ENCODE measurements at regions of chr11 and their contacts with region 1.

Region 1: DNA sequence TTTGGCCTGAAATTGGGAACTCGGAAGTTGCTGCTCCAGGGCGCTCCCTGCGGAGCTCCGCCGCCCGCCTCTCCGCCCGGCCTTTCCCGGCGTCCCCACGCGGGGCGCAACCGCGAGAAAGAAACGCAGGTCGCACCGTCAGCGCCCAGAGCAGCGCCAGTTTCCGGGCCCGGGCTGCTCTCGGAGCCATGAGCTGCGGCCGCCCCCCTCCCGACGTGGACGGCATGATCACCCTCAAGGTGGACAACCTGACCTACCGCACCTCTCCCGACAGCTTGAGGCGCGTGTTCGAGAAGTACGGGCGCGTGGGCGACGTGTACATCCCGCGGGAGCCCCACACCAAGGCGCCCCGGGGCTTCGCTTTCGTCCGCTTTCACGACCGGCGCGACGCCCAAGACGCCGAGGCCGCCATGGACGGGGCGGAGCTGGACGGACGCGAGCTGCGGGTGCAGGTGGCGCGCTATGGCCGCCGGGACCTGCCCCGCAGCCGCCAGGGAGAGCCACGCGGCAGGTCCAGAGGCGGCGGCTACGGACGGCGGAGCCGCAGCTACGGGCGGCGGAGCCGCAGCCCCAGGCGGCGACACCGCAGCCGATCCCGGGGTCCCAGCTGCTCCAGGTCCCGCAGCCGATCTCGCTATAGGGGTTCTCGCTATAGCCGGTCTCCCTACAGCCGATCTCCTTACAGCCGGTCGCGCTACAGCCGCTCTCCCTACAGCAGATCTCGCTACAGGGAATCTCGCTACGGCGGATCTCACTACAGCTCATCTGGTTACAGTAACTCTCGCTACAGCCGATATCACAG is 521 bp downstream of the SRSF8 start:
- DNase-seq: peak; percentile 87
- ATAC-seq: peak; percentile 68
- H3K4me3 Mint-ChIP-seq: peak overlapping the region; percentile 97
- H3K27ac Mint-ChIP-seq: peak overlapping the region; percentile 92
- H3K4me1 Mint-ChIP-seq: peaks cover 25% of the 10 kb centered on the region
- H3K27me3 Mint-ChIP-seq: peaks cover 2% of the 10 kb centered on the region

Region 2: DNA sequence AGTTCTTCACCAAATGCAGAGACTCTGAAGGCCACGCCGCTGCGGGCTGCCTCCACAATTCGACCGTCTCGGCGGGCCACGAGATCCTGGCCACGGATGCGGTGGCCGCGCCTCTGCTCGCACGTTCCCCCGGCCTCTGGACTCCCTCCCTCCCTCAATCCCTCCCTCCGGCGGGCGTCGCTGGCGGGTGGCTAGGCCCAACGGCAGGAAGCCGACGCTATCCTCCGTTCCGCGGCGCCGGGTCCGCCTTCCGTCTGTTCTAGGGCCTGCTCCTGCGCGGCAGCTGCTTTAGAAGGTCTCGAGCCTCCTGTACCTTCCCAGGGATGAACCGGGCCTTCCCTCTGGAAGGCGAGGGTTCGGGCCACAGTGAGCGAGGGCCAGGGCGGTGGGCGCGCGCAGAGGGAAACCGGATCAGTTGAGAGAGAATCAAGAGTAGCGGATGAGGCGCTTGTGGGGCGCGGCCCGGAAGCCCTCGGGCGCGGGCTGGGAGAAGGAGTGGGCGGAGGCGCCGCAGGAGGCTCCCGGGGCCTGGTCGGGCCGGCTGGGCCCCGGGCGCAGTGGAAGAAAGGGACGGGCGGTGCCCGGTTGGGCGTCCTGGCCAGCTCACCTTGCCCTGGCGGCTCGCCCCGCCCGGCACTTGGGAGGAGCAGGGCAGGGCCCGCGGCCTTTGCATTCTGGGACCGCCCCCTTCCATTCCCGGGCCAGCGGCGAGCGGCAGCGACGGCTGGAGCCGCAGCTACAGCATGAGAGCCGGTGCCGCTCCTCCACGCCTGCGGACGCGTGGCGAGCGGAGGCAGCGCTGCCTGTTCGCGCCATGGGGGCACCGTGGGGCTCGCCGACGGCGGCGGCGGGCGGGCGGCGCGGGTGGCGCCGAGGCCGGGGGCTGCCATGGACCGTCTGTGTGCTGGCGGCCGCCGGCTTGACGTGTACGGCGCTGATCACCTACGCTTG is 523.3 kb before region 1 on chr11 and contains the start of gene FUT4:
- CTCF ChIA-PET with region 1: no interaction called
- POLR2A ChIA-PET with region 1: no interaction called
- intact Hi-C with region 1: loop called in 1 of 2 experiments (anchors 1 kb)
- DNase-seq: peak; percentile 87
- ATAC-seq: peak; percentile 83
- H3K4me3 Mint-ChIP-seq: peak within 1 kb of the TSS; percentile 92
- H3K27ac Mint-ChIP-seq: peak within 1 kb of the TSS; percentile 99
- H3K4me1 Mint-ChIP-seq: peaks cover 39% of the 10 kb centered on the region
- H3K27me3 Mint-ChIP-seq: no peaks in the 10 kb centered on the region
- total RNA-seq, gene FUT4: 4.4 to 4.9 TPM

Region 3: GRCh38 chr11:94973099-94973968 is 93.9 kb before region 1 on chr11 and contains the starts of genes CWC15 and KDM4D:
- CTCF ChIA-PET with region 1: interaction called, 9 read pairs
- POLR2A ChIA-PET with region 1: interaction called, 8 read pairs
- intact Hi-C with region 1: loop called (anchors 1 kb)
- DNase-seq: peak; percentile 97
- ATAC-seq: peak; percentile 99
- H3K4me3 Mint-ChIP-seq: peak within 1 kb of the TSS; percentile 84
- H3K27ac Mint-ChIP-seq: peak within 1 kb of the TSS; percentile 94
- H3K4me1 Mint-ChIP-seq: peaks cover 27% of the 10 kb centered on the region
- H3K27me3 Mint-ChIP-seq: no peaks in the 10 kb centered on the region
- total RNA-seq, gene CWC15: 74.7 to 85.0 TPM
- total RNA-seq, gene KDM4D: 1.5 to 1.8 TPM

Region 4: DNA sequence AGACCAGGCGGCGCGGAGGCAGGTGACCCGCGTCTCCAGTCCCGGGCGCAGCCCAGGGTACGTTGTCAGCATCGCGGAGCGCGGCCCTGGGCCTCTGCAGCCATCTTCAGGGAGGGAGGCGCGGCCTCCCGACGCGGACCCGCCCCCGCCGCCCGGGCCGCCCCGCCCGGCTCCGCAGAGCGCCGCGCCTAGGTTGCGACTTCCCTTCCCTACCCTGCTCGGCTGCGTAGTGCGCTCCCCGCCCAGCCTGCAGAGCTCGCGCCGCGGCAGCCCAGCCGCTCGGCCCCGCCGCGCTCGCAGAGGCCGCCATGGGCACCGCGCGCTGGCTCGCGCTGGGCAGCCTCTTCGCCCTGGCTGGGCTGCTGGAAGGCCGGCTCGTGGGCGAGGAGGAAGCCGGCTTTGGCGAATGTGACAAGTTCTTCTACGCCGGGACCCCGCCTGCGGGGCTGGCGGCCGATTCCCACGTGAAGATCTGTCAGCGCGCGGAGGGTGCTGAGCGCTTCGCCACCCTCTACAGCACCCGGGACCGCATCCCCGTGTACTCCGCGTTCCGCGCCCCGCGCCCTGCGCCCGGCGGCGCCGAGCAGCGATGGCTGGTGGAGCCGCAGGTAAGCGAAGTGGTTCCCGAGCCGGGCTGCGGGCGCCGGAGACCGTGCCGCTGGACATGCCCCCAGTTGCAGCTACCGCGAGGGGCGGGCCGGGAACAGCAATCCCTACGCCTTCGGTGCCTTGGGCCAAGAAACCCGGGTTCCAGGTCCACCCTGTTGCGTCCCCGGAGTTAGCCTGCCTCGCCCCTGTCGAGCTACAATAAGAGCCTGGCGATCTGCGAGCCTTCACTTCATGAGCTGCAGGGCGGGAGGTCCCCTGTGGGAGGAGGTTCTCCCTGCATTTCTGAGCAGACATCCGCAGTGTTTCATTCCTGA is 22.6 kb after region 1 on chr11 and contains the start of gene ENDOD1:
- CTCF ChIA-PET with region 1: interaction called, 125 read pairs
- POLR2A ChIA-PET with region 1: interaction called, 9 read pairs
- intact Hi-C with region 1: loop called (anchors 1 kb)
- DNase-seq: peak; percentile 91
- ATAC-seq: peak; percentile 91
- H3K4me3 Mint-ChIP-seq: peak within 1 kb of the TSS; percentile 84
- H3K27ac Mint-ChIP-seq: peak within 1 kb of the TSS; percentile 96
- H3K4me1 Mint-ChIP-seq: peaks cover 61% of the 10 kb centered on the region
- H3K27me3 Mint-ChIP-seq: no peaks in the 10 kb centered on the region
- total RNA-seq, gene ENDOD1: 11.1 to 13.1 TPM

Region 5: DNA sequence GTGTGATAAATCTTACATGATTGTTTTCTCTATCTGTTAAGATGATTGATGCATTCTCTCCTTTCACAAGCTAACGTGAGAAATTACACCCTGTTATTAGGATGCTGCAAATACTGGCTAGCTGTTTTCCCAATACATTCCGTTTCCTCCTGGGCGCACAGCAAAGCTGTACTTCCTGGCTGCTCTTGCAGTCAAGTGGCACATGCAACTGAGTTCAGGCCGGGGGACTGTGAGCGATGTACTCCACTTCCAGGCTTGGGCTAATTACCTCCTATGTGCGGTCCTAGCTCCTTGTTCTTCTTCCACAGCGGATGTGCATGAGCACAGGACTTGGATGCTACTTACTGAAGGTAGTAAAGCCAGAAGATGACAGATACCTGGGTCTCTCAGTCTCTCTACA is 398.6 kb after region 1 on chr11:
- CTCF ChIA-PET with region 1: no interaction called
- POLR2A ChIA-PET with region 1: no interaction called
- intact Hi-C with region 1: no loop called
- DNase-seq: no peak
- ATAC-seq: no peak
- H3K4me3 Mint-ChIP-seq: no peak overlapping the region
- H3K27ac Mint-ChIP-seq: no peak overlapping the region
- H3K4me1 Mint-ChIP-seq: no peaks in the 10 kb centered on the region
- H3K27me3 Mint-ChIP-seq: no peaks in the 10 kb centered on the region

Region 6: DNA sequence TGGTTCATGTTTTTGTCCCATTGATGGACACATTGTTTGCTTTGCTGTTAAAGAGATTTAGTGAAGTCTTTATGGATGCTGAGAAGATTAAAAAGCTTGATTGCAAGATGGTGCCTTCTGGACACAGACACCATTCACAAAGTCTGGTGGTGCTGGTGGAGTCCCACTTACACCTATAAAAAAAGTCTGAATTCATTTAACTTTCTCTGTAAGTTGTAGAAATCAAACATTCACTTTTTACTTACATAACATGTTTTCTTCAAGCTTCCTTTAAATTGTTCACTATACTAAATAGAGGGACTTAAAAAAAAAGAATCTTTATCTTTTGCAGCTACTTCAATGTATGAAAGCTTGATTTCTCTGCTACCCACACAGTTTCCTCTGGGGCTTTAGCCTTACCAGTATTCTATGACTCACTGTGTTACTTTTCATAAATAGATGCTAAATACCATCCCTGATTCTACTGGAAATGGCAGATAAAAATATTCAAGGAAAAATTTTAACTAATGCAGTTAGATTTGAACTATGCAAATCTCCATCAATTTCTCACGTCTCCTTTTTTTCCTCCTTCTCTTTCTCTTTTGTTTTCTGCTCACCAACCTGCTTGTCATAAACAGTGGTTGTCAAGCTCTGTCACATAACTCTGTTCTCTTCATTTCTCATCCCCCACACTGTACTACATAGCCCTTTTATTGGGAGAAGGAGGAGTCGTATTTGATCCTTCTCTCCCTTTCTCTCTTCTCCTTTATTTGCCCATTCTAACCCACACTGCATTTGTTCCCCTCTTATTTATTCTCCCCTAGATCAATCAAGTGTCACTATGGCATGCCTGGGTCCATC is 632.6 kb after region 1 on chr11:
- CTCF ChIA-PET with region 1: interaction called, 8 read pairs
- POLR2A ChIA-PET with region 1: no interaction called
- intact Hi-C with region 1: loop called (anchors 1 to 5 kb)
- DNase-seq: peak; percentile 25
- ATAC-seq: peak; percentile 54
- H3K4me3 Mint-ChIP-seq: peak overlapping the region; percentile 55
- H3K27ac Mint-ChIP-seq: peak overlapping the region; percentile 95
- H3K4me1 Mint-ChIP-seq: peaks cover 58% of the 10 kb centered on the region
- H3K27me3 Mint-ChIP-seq: no peaks in the 10 kb centered on the region

Region 7: DNA sequence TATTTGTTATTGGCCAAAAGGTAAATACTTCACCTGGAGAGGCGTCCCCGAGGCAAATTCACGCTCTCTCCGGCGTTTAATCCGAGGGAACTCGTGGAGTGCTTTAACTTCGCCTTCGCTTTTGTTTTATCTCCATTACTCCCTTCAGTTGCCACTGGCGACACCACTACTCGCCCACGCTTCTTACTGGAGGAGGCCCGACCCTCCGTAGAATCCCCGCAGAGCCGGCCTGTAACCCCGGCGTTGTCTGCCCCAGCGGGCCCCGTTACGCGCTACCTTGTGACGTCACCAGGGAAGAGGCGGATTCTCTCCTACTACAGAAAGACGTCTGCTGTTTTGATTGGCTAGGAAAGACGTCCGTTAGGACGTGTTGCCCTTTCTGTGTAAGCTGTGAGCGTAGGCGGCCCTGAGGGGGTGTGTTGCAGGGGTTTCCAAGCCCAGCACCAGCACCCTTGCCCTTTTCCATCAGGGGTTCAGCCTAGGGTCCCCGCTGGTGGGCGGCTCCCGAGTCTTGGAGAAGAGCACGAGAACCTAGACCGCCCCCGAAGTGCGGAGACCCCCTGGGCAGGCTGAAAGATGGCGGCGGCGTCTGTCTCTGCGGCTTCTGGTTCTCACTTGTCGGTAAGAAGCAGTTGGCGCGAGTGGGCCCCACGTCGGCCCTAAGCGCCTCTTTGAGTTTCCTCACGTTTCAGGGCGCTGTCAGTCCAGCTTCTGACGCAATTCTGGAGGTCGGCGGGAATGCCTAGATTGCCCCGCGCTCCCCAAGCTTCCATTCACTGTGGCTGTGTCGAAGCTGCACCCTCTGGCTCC is 723.1 kb after region 1 on chr11 and contains the start of gene CEP57:
- CTCF ChIA-PET with region 1: interaction called, 8 read pairs
- POLR2A ChIA-PET with region 1: interaction called, 4 read pairs
- intact Hi-C with region 1: loop called (anchors 1 to 5 kb)
- DNase-seq: peak; percentile 98
- ATAC-seq: peak; percentile 67
- H3K4me3 Mint-ChIP-seq: peak within 1 kb of the TSS; percentile 99
- H3K27ac Mint-ChIP-seq: peak within 1 kb of the TSS; percentile 100
- H3K4me1 Mint-ChIP-seq: peaks cover 53% of the 10 kb centered on the region
- H3K27me3 Mint-ChIP-seq: no peaks in the 10 kb centered on the region
- total RNA-seq, gene CEP57: 101 to 134 TPM

Measured in activated CD4-positive, alpha-beta T cell treated with anti-CD3 and anti-CD28 coated beads for 36 hours (primary cell).